Activated CD4-positive, alpha-beta memory T cell treated with anti-CD3 and anti-CD28 coated beads for 36 hours (primary cell): ENCODE measurements at regions of chr4 and their contacts with region 1.

Region 1: DNA sequence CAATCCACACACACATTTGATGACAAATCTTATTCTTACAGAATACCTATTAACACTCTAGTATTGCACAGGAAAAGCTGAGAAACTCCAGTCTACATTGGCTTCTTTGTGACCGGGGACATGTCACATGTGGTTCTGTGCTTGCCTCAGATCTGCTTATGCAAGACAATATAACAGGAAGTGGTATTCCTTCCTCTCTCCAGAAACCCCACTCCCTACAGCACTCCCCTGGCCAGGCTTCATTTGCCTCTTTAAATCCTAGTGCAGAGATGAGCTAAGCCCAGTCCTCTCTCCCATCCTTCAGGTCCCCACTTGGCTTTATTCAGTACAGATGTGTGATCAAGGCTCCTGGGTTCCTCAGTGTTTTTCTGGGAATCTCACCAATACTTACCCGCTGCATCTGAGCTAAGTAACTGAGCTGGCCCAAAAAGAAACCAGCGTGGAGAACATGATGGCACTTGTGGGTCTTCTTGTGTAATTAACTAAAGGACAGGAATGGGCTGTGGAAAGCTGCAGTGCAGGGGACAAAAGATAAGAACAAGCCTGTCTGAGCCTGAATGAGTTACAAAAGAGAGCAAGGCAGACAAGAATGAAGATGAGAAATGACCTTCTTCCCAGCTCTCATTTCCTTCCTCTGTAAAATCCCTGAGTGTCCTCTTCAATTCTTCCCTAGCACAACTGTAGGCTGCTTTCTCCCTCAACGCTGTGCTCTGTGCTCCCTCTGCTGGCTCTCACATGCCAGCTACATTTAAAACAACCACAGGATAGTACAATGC is 105.6 kb downstream of the HNRNPD start:
- DNase-seq: peak; percentile 54
- H3K4me3 Mint-ChIP-seq: no peak overlapping the region
- H3K27ac Mint-ChIP-seq: no peak overlapping the region
- H3K4me1 Mint-ChIP-seq: peaks cover 9% of the 10 kb centered on the region
- H3K27me3 Mint-ChIP-seq: peaks cover 3% of the 10 kb centered on the region

Region 2: DNA sequence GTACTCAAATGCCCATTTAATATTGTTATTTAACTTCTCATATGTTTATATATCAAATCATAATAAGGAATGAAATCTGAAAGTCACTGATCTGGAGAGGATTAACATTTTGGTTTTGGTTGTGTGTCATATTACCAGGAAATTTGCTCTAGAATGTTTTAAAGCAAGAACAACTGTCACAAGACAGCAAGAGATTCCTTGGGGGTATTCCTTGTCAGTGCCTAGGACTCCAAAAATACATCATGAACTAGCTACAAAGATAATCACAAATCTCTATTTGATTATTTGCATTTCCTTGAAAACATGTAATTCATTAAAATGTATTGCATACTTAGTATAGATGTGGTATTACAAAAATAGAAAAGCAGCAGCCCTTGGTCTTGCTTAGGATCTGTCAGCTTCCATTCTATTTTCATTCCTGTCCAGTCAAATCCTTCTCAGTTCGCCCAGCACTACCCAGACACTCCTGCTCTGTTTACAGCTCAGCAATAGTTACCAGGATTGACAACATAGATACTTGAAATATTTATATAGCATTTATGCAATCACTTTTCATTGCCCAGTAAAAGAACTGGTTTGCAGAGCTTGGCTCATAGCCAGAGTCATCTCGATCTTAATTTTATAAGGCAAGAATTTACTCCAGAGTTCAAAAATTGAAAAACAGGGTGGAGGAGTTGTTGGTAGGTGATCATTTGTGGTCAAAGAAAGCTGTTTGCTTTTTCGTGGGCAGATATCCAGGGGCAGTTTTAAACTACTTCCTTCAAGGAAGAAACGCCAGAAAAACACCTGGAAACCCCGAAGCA is 1246.9 kb before region 1 on chr4:
- CTCF ChIA-PET with region 1: no interaction called
- POLR2A ChIA-PET with region 1: no interaction called
- intact Hi-C with region 1: no loop called
- DNase-seq: no peak
- H3K4me3 Mint-ChIP-seq: no peak overlapping the region
- H3K27ac Mint-ChIP-seq: no peak overlapping the region
- H3K4me1 Mint-ChIP-seq: no peaks in the 10 kb centered on the region
- H3K27me3 Mint-ChIP-seq: peaks cover 20% of the 10 kb centered on the region

Region 3: DNA sequence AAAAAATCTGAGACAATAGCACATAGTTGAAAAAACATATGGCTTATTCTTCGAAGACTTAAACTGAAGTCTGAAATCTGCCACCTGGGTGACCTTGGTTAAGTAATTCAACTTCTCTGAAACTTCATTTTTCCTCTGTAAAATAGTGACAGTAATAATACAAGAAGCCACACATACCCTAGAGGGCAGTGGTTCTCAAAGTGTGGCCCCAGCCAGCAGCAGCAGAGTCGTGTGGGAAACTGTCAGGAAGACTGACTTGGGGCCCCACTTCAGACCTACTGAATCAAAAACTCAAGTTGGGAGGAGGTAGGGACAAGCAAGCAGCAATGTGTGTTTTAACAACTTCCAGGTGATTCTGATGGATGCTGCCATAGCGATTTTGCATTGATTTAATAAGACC is 144.3 kb before region 1 on chr4:
- CTCF ChIA-PET with region 1: no interaction called
- POLR2A ChIA-PET with region 1: no interaction called
- intact Hi-C with region 1: loop called (anchors 5 kb)
- DNase-seq: peak; percentile 11
- H3K4me3 Mint-ChIP-seq: no peak overlapping the region
- H3K27ac Mint-ChIP-seq: no peak overlapping the region
- H3K4me1 Mint-ChIP-seq: peaks cover 2% of the 10 kb centered on the region
- H3K27me3 Mint-ChIP-seq: no peaks in the 10 kb centered on the region

Region 4: GRCh38 chr4:82256718-82257117 is 11.5 kb before region 1 on chr4:
- CTCF ChIA-PET with region 1: interaction called, 22 read pairs
- POLR2A ChIA-PET with region 1: no interaction called
- intact Hi-C with region 1: no loop called
- DNase-seq: no peak
- H3K4me3 Mint-ChIP-seq: no peak overlapping the region
- H3K27ac Mint-ChIP-seq: no peak overlapping the region
- H3K4me1 Mint-ChIP-seq: no peaks in the 10 kb centered on the region
- H3K27me3 Mint-ChIP-seq: no peaks in the 10 kb centered on the region

Region 5: DNA sequence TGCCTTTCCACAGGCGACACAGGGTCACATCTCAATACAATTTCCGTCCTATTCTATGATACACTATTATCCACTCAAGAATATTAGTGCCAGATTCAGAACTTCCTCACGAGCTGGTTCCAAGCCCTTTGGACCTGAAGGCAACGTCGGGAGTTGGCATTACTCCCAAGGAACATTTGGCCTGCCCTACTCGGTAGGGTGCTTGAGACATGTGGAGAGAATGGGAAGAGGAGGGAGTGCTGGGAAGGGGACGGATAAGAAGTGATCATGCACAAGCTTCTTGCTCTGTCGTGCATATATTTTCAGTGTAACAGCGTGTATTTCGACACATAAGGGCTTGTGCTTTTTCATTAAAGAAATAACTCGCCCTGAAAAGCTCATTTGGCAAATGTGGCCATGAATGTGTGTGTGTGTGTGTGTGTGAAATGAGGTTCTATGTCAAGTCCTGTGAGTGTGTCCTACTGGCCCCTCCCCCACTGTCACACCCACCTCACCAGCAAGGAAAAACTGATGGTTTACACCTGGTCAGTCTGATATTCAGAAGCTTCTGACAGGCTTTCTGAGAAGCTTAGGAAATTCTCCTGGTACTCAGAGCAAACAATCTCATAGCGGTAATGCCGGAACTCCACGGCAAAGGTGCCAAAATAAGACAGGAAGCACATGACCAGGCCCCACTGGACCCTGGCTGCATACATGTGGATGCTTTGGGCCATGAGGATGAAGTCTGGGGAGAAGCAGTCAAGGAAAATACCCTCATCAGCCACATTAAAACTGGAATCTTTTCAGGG is 217.0 kb after region 1 on chr4:
- CTCF ChIA-PET with region 1: no interaction called
- POLR2A ChIA-PET with region 1: no interaction called
- intact Hi-C with region 1: no loop called
- DNase-seq: no peak
- H3K4me3 Mint-ChIP-seq: no peak overlapping the region
- H3K27ac Mint-ChIP-seq: no peak overlapping the region
- H3K4me1 Mint-ChIP-seq: no peaks in the 10 kb centered on the region
- H3K27me3 Mint-ChIP-seq: no peaks in the 10 kb centered on the region